GM10248 (cell line): ENCODE measurements at regions of chr7 and their contacts with region 1.

Region 1: DNA sequence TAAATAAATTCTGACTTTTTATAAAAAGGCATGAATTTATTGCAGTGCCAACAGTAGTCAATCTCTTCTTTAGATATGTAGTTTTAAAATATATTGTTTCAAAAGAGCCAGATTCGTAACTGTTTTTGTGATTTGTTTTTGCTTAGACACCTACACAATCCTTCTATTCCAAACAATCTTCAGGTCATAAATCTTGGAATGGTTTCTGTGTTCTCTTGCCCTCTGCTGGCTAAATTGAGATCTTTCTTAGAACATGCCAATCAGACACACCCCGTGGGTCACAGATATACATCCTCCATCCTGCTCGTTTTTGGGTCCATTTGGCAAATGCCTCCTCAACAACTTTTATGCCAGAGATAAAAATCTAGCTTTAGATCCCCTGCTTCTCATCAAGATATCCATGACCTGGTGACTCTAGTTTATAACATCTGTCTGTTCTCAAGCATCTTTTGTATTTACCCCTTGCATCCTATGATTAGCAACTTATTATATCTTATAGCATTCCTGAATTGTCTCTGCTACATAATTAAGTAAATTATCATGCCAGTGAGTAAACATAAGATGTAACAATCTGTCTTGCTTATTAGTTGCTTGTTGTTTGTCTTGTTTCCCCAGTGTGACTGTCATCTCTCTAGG is 35.3 kb upstream of the IFRD1 start:
- DNase-seq: peak; percentile 19
- CTCF ChIP-seq: peak; percentile 23

Region 2: DNA sequence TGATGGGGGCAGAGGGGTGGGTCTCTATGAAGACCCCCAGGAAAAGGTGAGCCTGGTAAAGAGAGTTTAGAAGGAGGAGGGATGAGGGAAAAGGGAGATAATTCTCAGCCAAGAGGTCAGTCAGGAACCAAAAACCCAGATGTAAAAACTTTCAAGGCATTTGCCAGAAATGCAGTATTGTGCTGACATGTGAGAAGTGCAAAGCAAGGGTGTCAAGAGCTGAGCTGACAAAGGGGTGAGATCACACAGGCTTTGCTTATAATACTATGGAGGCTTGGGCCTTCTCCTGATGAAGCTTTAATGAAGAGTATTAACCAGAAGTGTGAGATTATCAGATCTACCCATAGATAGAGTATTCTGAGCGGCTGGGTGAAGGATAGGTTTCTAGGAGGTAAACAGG is 13.0 kb after region 1 on chr7:
- CTCF ChIA-PET with region 1: interaction called, 11 read pairs
- POLR2A ChIA-PET with region 1: no interaction called
- DNase-seq: no peak
- CTCF ChIP-seq: no peak